ENCODE measurements at regions of chr6 and their contacts with region 1.

Region 1: GRCh38 chr6:44237813-44238433 is 9.0 kb upstream of the HSP90AB1 start:
- DNase-seq: peak in 1 of 2 experiments; percentile 89
- H3K4me3 ChIP-seq: peak overlapping the region; percentile 19 to 71 (median 48)
- H3K27ac ChIP-seq: peak overlapping the region; percentile 11; the same call in 1 of the 2 replicates
- H3K4me1 ChIP-seq: peaks cover 4 to 15% (median 9%) of the 10 kb centered on the region in 4 experiments; a peak in 6 of 7 replicates
- H3K27me3 ChIP-seq: no peaks in the 10 kb centered on the region; a peak in 1 of 7 replicates
- CTCF ChIP-seq: peak in 2 of 3 experiments; percentile 88 to 93; a peak in 3 of 4 replicates
- EP300 ChIP-seq: peak in 1 of 2 experiments; percentile 33; a peak in 1 of 3 replicates
- POLR2A ChIP-seq: peak in 1 of 2 experiments; percentile 68; a peak in 2 of 3 replicates
- RAD21 ChIP-seq: peak; percentile 47 to 59; a peak in 3 of 4 replicates

Region 2: DNA sequence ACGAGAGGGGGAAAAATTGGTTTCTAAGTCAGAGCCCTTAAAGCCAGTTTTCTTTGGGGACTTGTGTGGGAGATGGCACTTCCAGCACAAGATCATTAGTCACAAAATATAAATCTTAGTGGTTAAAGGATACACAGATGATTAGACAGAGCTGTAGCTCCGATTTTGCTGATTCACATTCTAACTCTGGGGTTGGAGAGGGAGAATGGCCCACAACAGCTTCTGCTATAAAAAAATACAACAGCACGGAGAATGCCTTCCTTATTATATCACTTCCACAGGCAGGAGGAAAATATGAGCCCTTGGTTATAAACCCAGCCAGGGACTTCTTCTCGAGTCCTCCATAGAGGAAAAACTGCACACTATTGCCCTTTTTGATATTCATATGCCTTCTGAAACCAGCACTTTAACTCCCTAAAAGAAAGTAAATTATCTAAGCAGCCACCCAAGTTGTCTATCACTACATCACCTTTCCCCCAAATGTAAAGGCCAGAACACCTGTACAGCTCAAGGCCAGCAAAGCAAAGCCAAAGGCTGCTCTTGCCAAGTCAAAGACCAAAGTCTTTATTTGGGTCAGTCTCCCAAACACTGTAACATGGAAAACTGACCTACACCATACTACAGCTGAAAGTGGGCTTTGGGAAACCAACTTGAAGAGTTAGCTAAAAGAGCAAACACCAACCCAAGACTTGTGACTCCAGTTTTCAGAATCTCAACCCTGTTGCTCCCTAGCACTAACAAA is 121.1 kb before region 1 on chr6:
- CTCF ChIA-PET with region 1: interaction called, 19 read pairs
- POLR2A ChIA-PET with region 1: no interaction called
- DNase-seq: no peak
- H3K4me3 ChIP-seq: no peak overlapping the region
- H3K27ac ChIP-seq: peak overlapping the region; percentile 39; the same call in 1 of the 2 replicates
- H3K4me1 ChIP-seq: peaks cover 0 to 7% (median 2%) of the 10 kb centered on the region in 4 experiments; a peak in 3 of 7 replicates
- H3K27me3 ChIP-seq: no peaks in the 10 kb centered on the region
- CTCF ChIP-seq: no peak
- EP300 ChIP-seq: no peak
- POLR2A ChIP-seq: no peak
- RAD21 ChIP-seq: no peak

Region 3: GRCh38 chr6:44172731-44173500 is 65.0 kb before region 1 on chr6:
- CTCF ChIA-PET with region 1: interaction called, 287 read pairs
- POLR2A ChIA-PET with region 1: interaction called, 15 read pairs
- DNase-seq: peak in 1 of 2 experiments; percentile 91
- H3K4me3 ChIP-seq: no peak overlapping the region
- H3K27ac ChIP-seq: no peak overlapping the region
- H3K4me1 ChIP-seq: peaks cover 0 to 12% (median 3%) of the 10 kb centered on the region in 4 experiments; a peak in 6 of 7 replicates
- H3K27me3 ChIP-seq: no peaks in the 10 kb centered on the region
- CTCF ChIP-seq: peak; percentile 89 to 94 (median 90)
- EP300 ChIP-seq: no peak
- POLR2A ChIP-seq: no peak
- RAD21 ChIP-seq: peak; percentile 93 to 94

Region 4: GRCh38 chr6:44201638-44202303 is 36.2 kb before region 1 on chr6:
- CTCF ChIA-PET with region 1: interaction called, 13 read pairs
- POLR2A ChIA-PET with region 1: interaction called, 7 read pairs
- DNase-seq: no peak
- H3K4me3 ChIP-seq: no peak overlapping the region; a peak in 1 of 8 replicates
- H3K27ac ChIP-seq: peak overlapping the region; percentile 93
- H3K4me1 ChIP-seq: peaks cover 20 to 30% (median 28%) of the 10 kb centered on the region in 4 experiments
- H3K27me3 ChIP-seq: no peaks in the 10 kb centered on the region
- CTCF ChIP-seq: no peak
- EP300 ChIP-seq: no peak
- POLR2A ChIP-seq: no peak
- RAD21 ChIP-seq: no peak

Region 5: DNA sequence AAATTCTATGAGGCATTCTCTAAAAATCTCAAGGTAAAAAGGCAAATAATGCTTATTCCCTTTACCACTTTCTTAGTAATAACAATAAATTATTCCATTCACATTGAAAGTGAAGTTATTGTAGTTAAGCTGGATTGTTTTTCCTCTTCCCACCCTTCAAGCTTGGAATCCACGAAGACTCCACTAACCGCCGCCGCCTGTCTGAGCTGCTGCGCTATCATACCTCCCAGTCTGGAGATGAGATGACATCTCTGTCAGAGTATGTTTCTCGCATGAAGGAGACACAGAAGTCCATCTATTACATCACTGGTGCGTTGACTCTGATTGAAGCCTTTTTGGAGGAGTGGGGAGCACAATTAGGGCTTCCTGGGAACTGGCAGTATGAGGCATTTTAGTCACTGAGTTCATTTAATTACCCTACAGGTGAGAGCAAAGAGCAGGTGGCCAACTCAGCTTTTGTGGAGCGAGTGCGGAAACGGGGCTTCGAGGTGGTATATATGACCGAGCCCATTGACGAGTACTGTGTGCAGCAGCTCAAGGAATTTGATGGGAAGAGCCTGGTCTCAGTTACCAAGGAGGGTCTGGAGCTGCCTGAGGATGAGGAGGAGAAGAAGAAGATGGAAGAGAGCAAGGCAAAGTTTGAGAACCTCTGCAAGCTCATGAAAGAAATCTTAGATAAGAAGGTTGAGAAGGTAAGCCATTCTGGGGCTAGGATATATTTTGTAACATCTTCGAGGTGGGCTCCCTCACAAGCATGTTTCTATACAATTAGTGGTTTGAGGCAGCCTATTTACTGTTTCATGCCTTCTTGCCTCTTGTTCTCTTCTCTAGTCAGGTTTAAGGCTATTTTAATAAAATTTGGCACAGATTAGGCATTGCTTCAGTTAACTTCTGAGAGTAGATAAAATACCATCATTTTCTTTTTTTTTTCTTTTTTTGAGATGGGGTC is 13.9 kb after region 1 on chr6:
- CTCF ChIA-PET with region 1: interaction called, 102 read pairs
- POLR2A ChIA-PET with region 1: interaction called, 581 read pairs
- DNase-seq: no peak
- H3K4me3 ChIP-seq: no peak overlapping the region
- H3K27ac ChIP-seq: no peak overlapping the region
- H3K4me1 ChIP-seq: peaks cover 7 to 17% (median 8%) of the 10 kb centered on the region in 4 experiments; a peak in 6 of 7 replicates
- H3K27me3 ChIP-seq: no peaks in the 10 kb centered on the region
- CTCF ChIP-seq: no peak
- EP300 ChIP-seq: no peak
- POLR2A ChIP-seq: peak; percentile 38 to 84
- RAD21 ChIP-seq: no peak

Region 6: DNA sequence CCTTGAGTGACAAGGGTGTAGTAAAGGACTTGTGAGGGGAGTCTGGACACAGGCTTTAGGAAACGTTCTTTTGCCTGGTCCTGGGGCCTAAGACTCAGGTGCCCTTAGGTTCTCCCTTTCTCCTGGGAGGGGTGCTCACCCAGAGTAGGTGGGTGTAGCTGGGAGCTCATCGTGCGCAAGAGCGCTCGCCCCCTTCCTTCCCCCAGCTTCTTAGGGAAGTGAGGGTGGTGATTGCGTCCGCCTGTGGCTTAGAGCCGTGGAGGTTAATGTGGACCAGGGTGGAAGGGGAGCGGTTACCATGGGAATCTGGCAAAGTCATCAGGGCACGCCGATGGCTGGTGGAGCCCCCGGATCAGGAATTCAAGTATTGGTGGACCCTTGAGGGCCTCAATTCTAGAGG is 78.6 kb after region 1 on chr6:
- CTCF ChIA-PET with region 1: no interaction called
- POLR2A ChIA-PET with region 1: no interaction called
- DNase-seq: no peak
- H3K4me3 ChIP-seq: no peak overlapping the region
- H3K27ac ChIP-seq: no peak overlapping the region
- H3K4me1 ChIP-seq: peaks cover 3 to 6% (median 3%) of the 10 kb centered on the region in 4 experiments
- H3K27me3 ChIP-seq: peaks cover 0 to 2% (median 0%) of the 10 kb centered on the region in 4 experiments; a peak in 1 of 7 replicates
- CTCF ChIP-seq: no peak
- EP300 ChIP-seq: no peak
- POLR2A ChIP-seq: no peak
- RAD21 ChIP-seq: no peak

Region 7: GRCh38 chr6:44338228-44339122 is 100.6 kb after region 1 on chr6:
- CTCF ChIA-PET with region 1: interaction called, 11 read pairs
- POLR2A ChIA-PET with region 1: no interaction called
- DNase-seq: peak; percentile 59 to 81
- H3K4me3 ChIP-seq: no peak overlapping the region
- H3K27ac ChIP-seq: no peak overlapping the region
- H3K4me1 ChIP-seq: peaks cover 0 to 5% (median under 1%) of the 10 kb centered on the region in 4 experiments; a peak in 3 of 7 replicates
- H3K27me3 ChIP-seq: peaks cover 3 to 6% (median 5%) of the 10 kb centered on the region in 4 experiments; a peak in 5 of 7 replicates
- CTCF ChIP-seq: peak; percentile 73 to 87 (median 85)
- EP300 ChIP-seq: no peak
- POLR2A ChIP-seq: no peak
- RAD21 ChIP-seq: peak; percentile 94 to 96

Measured in H1 (cell line).